Right cardiac atrium (tissue), 5 donors: ENCODE measurements at regions of chr12 and their contacts with region 1.

Region 1: DNA sequence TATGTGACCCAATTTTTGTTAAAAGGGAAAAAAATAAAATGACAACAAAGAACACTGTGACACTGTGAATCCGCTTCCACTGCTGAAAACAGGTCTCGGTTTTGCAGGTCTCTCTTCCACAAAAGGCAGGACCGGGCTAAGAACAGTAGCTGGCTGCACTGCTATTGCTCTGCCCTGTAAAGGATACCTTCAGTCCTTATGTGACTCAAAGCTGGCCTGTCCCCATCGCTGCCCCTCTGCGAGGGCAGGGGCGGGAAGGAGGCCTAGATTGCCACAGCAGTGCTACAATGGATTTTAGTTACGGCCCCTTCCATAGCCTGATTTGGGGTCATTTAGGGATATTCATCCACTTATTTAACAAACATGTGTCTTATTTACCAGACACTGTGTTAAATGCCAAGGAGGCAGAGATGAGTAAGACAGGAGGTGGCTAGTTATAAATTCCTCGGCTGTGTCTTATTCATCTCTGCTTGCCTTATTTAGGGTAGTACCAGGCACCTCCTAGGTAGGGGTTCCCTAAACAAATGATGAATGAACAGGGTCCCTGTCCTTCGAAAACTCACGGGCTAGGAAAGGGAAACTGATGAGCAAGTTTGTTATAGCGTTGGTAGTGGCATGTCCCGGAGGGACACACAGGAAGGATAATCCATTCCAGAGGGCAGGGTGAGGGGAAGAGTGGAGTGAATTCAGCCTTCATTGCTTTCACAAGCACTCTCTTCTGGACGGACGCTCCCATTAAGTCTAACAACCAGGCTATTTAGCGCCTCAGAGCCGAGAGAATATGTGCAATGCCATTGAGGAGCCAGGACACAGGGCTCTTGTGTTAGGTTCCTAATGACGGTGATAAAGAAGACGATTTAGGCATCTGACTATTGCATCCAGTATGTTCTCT is 73.4 kb downstream of the EID3 start:
- DNase-seq: no peak
- ATAC-seq: no peak
- H3K4me3 ChIP-seq: no peak overlapping the region
- H3K27ac ChIP-seq: no peak overlapping the region
- H3K4me1 ChIP-seq: peaks cover under 1% of the 10 kb centered on the region
- H3K27me3 ChIP-seq: no peaks in the 10 kb centered on the region

Region 2: DNA sequence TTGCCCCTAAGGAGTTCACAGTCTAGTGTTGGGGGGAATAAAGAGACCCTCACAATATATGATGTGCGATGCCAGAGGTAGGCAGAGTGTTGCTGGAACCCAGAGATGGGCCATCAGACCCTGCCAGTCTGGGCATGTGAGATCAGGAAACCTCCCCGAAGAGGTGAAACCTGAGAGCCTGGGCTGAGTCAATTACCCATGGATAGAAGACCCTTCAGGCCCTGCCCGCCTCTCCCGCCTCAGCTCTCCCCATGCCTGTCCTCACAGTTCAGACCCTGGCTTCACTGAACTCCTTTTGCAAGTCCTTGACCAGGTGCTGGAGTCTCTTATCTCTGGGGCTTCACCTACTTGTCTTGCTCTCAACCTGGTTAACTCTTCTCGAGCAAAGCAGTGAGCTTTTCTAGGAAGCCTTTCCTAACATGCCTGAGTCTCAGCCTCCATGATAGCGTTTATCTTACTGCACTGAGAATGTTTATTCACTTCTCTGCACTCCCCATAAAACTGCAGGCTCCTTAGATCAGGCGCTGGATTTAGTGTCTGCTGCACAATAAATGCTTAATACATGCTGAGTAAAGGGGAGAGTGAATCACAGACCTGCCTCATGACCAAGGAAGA is 687.8 kb after region 1 on chr12:
- intact Hi-C with region 1: loop called in 1 of 4 experiments (anchors 5 kb)
- DNase-seq: no peak
- ATAC-seq: no peak
- H3K4me3 ChIP-seq: no peak overlapping the region
- H3K27ac ChIP-seq: no peak overlapping the region
- H3K4me1 ChIP-seq: no peaks in the 10 kb centered on the region
- H3K27me3 ChIP-seq: no peaks in the 10 kb centered on the region